ENCODE measurements at regions of chr20 and their contacts with region 1.

Region 1: DNA sequence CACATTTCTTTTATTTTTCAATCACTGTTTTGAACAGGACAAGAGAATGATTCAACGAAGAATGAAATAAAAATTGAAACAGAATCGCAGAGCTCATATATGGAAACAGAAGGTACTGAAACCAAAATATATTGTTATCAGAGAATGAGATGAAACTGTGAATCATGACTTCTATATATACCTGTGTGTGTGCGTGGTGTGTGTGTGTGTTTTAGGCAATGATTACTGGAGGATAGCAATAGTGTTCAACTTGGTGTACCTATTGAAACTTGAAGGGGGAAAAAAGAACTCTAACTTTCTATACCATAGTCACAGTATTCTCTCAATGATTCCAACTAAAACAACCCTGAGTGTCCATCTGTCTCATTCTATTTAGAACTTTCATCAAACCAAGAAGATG is 586.6 kb downstream of the KIF16B start:
- DNase-seq: no peak
- ATAC-seq: peak; percentile 81
- H3K4me3 Mint-ChIP-seq: peak overlapping the region; percentile 86
- H3K27ac Mint-ChIP-seq: peak overlapping the region; percentile 97
- H3K4me1 Mint-ChIP-seq: peaks cover 64% of the 10 kb centered on the region
- H3K27me3 Mint-ChIP-seq: no peaks in the 10 kb centered on the region
- CTCF ChIP-seq: no peak

Region 2: DNA sequence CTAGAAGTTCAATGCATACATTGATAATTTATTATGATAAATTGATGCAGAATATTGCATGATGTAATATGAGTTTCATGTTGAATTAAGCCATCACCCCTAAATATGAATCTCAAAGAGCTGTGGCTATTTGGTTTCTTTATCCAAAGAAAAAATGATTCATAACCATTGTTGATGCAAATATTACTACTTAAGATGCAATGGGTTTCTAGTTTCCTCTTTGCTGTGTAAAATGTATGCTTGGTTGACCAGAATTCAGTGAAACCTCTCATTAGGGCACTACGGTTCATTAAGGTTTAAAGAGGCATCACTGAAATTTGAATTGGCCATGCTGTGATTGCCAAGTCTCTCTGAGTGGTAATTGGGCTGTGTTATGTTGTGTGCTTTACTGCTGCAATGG is 1156.8 kb before region 1 on chr20:
- CTCF ChIA-PET with region 1: no interaction called
- POLR2A ChIA-PET with region 1: no interaction called
- intact Hi-C with region 1: loop called (anchors 5 kb)
- DNase-seq: no peak
- ATAC-seq: peak; percentile 51
- H3K4me3 Mint-ChIP-seq: no peak overlapping the region
- H3K27ac Mint-ChIP-seq: peak overlapping the region; percentile 12
- H3K4me1 Mint-ChIP-seq: peaks cover 22% of the 10 kb centered on the region
- H3K27me3 Mint-ChIP-seq: peaks cover 2% of the 10 kb centered on the region
- CTCF ChIP-seq: no peak

Region 3: GRCh38 chr20:15889514-15890256 is 97.0 kb before region 1 on chr20:
- CTCF ChIA-PET with region 1: no interaction called
- POLR2A ChIA-PET with region 1: interaction called, 3 read pairs
- intact Hi-C with region 1: loop called (anchors 2 kb)
- DNase-seq: no peak
- ATAC-seq: peak; percentile 32
- H3K4me3 Mint-ChIP-seq: no peak overlapping the region
- H3K27ac Mint-ChIP-seq: peak overlapping the region; percentile 74
- H3K4me1 Mint-ChIP-seq: peaks cover 33% of the 10 kb centered on the region
- H3K27me3 Mint-ChIP-seq: no peaks in the 10 kb centered on the region
- CTCF ChIP-seq: no peak

Region 4: DNA sequence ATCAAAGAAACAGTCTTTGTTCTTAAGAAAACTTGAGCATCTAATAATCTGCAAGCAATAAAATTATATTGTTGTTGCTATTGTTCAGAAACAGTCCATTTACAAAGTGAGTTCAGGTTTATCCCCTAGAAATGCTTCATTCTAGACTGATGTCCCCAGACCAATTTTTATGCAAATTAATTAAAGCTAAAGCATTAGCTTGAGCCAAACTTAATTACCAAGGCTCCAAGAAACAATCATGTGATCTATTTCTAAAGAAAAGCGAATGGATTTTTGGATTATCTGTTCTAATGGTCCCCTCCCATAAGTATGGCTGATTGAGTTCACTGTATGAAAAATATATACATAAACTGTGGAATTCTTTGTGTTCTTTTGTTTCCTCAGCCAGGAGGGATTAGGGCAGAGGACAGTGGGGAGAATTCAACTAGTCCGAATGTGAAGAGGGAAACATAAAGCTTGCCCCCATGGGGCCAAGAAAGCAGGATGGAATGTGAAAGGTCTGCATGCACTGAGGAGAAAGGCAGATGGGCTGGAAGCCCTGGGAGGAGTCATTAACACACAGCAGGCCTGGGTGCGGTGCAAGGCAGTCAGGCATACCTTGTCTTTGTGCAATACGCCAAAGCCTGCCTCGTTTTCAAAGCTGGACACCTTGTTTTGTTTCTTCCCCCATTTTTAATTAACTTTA is 10.5 kb before region 1 on chr20:
- CTCF ChIA-PET with region 1: no interaction called
- POLR2A ChIA-PET with region 1: no interaction called
- intact Hi-C with region 1: loop called (anchors 1 kb)
- DNase-seq: no peak
- ATAC-seq: no peak
- H3K4me3 Mint-ChIP-seq: no peak overlapping the region
- H3K27ac Mint-ChIP-seq: no peak overlapping the region
- H3K4me1 Mint-ChIP-seq: peaks cover 50% of the 10 kb centered on the region
- H3K27me3 Mint-ChIP-seq: no peaks in the 10 kb centered on the region
- CTCF ChIP-seq: no peak

Region 5: DNA sequence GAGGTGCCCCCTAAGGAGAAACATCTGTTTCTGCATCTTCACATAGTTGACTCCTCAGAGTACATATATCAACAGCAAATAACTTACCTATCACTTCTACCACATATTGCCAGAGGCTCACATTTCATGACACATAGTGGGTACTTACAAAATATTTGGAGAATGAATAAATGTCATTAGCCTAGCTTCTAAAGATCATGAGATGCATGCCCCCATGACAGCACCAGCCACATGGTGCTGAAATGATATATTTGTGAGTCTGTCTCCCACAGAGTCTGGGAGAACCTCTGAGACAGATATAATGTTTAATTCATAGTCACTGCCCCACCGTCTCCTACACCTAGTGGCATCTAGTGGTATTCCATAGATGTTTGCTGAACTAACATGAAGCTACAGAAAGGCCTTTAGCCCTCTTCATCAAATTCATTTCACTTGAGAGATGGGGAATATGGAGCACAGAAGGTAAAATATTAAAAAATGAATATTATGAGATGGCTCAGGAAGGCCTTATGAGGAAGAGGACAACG is 31.0 kb after region 1 on chr20:
- CTCF ChIA-PET with region 1: no interaction called
- POLR2A ChIA-PET with region 1: no interaction called
- intact Hi-C with region 1: no loop called
- DNase-seq: no peak
- ATAC-seq: no peak
- H3K4me3 Mint-ChIP-seq: no peak overlapping the region
- H3K27ac Mint-ChIP-seq: no peak overlapping the region
- H3K4me1 Mint-ChIP-seq: peaks cover 10% of the 10 kb centered on the region
- H3K27me3 Mint-ChIP-seq: no peaks in the 10 kb centered on the region
- CTCF ChIP-seq: no peak

Region 6: GRCh38 chr20:16083639-16084280 is 97.1 kb after region 1 on chr20:
- CTCF ChIA-PET with region 1: no interaction called
- POLR2A ChIA-PET with region 1: no interaction called
- intact Hi-C with region 1: loop called (anchors 5 kb)
- DNase-seq: no peak
- ATAC-seq: no peak
- H3K4me3 Mint-ChIP-seq: peak overlapping the region; percentile 20
- H3K27ac Mint-ChIP-seq: peak overlapping the region; percentile 75
- H3K4me1 Mint-ChIP-seq: peaks cover 56% of the 10 kb centered on the region
- H3K27me3 Mint-ChIP-seq: no peaks in the 10 kb centered on the region
- CTCF ChIP-seq: no peak

Region 7: DNA sequence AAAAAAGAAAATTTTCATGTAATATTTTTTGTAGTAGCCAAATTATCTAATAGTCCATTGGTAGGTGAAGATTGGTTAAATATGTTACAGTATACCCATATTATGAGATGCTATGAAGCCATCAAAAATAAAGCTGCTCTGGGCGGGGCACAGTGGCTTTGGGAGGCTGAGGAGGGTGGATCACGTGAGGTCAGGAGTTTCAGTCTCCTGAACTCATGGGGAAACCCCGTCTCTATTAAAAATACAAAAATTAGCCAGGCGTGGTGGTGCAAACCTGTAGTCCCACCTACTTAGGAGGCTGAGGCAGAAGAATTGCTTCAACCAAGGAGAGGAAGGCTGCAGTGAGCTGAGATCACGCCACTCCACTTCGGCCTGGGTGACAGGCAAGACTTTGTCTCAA is 226.1 kb after region 1 on chr20:
- CTCF ChIA-PET with region 1: no interaction called
- POLR2A ChIA-PET with region 1: no interaction called
- intact Hi-C with region 1: loop called (anchors 2 kb)
- DNase-seq: no peak
- ATAC-seq: peak; percentile 77
- H3K4me3 Mint-ChIP-seq: no peak overlapping the region
- H3K27ac Mint-ChIP-seq: no peak overlapping the region
- H3K4me1 Mint-ChIP-seq: peaks cover 22% of the 10 kb centered on the region
- H3K27me3 Mint-ChIP-seq: no peaks in the 10 kb centered on the region
- CTCF ChIP-seq: no peak

Region 8: GRCh38 chr20:16476032-16476431 is 489.3 kb after region 1 on chr20:
- CTCF ChIA-PET with region 1: interaction called, 4 read pairs
- POLR2A ChIA-PET with region 1: no interaction called
- intact Hi-C with region 1: loop called (anchors 5 kb)
- DNase-seq: no peak
- ATAC-seq: peak; percentile 73
- H3K4me3 Mint-ChIP-seq: no peak overlapping the region
- H3K27ac Mint-ChIP-seq: no peak overlapping the region
- H3K4me1 Mint-ChIP-seq: peaks cover 8% of the 10 kb centered on the region
- H3K27me3 Mint-ChIP-seq: no peaks in the 10 kb centered on the region
- CTCF ChIP-seq: no peak